H1 (cell line): ENCODE measurements at regions of chr16 and their contacts with region 1.

Region 1: GRCh38 chr16:29973384-29974246 is at the start of gene TAOK2:
- DNase-seq: peak; percentile 99 to 100
- H3K4me3 ChIP-seq: peak within 1 kb of the TSS; percentile 80 to 90 (median 85)
- H3K27ac ChIP-seq: peak within 1 kb of the TSS; percentile 55; the same call in 1 of the 2 replicates
- H3K4me1 ChIP-seq: peaks cover 4 to 20% (median 7%) of the 10 kb centered on the region in 4 experiments
- H3K27me3 ChIP-seq: peaks cover 2 to 10% (median 9%) of the 10 kb centered on the region in 4 experiments
- CTCF ChIP-seq: no peak
- EP300 ChIP-seq: no peak
- POLR2A ChIP-seq: peak in 1 of 2 experiments; percentile 54; a peak in 1 of 3 replicates
- RAD21 ChIP-seq: no peak
- total RNA-seq, gene TAOK2: 32.6 and 34.2 TPM in 2 replicates

Region 2: GRCh38 chr16:29926005-29926710 is 47.5 kb before region 1 on chr16 and contains the start of gene KCTD13:
- CTCF ChIA-PET with region 1: no interaction called
- POLR2A ChIA-PET with region 1: interaction called, 11 read pairs
- DNase-seq: peak; percentile 62 to 98
- H3K4me3 ChIP-seq: peak within 1 kb of the TSS; percentile 62 to 89 (median 85)
- H3K27ac ChIP-seq: peak within 1 kb of the TSS; percentile 86
- H3K4me1 ChIP-seq: peaks cover 0 to 8% (median 0%) of the 10 kb centered on the region in 4 experiments; a peak in 2 of 7 replicates
- H3K27me3 ChIP-seq: no peaks in the 10 kb centered on the region
- CTCF ChIP-seq: 0 out of 4 replicates have a peak, but pooled peaks of 1 of the 3 experiments have one; percentile 2
- EP300 ChIP-seq: no peak
- POLR2A ChIP-seq: peak; percentile 62 to 90
- RAD21 ChIP-seq: no peak
- total RNA-seq, gene KCTD13: 10.8 and 12.3 TPM in 2 replicates

Region 3: DNA sequence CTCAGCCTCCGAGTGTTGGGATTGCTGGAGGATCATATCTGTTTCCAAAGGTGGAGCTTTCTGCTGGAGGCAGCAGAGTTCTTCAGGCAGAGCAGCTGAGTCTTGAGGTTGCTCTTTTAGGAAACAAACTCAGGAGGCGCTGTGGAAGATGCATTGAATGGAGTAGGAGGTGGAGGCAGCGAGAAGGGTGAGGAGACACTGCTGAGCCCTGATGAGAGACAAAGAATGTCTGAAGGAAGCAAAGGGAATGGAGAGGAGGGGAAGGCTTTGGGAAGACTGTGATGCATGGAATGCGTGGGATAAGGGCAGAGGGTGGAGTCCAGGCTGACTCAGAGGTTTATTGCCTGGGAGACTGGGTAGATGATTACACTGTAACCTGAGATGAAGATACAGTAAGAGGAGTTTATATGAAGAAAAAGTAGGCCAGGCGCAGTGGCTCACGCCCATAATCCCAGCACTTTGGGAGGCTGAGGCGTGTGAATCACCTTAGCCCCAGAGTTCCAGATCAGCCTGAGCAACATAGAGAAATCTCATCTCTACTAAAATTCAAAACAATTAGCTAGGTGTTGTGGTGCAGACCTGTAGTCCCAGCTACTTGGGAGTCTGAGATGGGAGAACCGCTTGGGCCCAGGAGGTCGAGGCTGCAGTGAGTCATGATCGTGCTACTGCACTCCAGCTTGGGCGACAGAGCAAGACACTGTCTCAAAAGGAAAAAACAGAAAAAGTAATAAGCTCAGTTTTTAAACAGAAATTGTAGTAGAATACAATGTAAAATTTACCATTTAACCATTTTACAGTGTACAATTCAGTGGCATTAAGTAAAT is 29.6 kb before region 1 on chr16:
- CTCF ChIA-PET with region 1: interaction called, 19 read pairs
- POLR2A ChIA-PET with region 1: interaction called, 4 read pairs
- DNase-seq: no peak
- H3K4me3 ChIP-seq: no peak overlapping the region
- H3K27ac ChIP-seq: no peak overlapping the region
- H3K4me1 ChIP-seq: no peaks in the 10 kb centered on the region; a peak in 1 of 7 replicates
- H3K27me3 ChIP-seq: peaks cover 0 to 3% (median 0%) of the 10 kb centered on the region in 4 experiments; a peak in 1 of 7 replicates
- CTCF ChIP-seq: peak; percentile 22 to 67 (median 51)
- EP300 ChIP-seq: no peak
- POLR2A ChIP-seq: no peak
- RAD21 ChIP-seq: peak; percentile 25 to 31; a peak in 2 of 4 replicates

Region 4: GRCh38 chr16:29961479-29962343 is 11.9 kb before region 1 on chr16 and contains the start of gene TMEM219:
- CTCF ChIA-PET with region 1: interaction called, 6 read pairs
- POLR2A ChIA-PET with region 1: interaction called, 33 read pairs
- DNase-seq: peak in 1 of 2 experiments; percentile 96
- H3K4me3 ChIP-seq: peak within 1 kb of the TSS; percentile 51 to 81 (median 72)
- H3K27ac ChIP-seq: peak within 1 kb of the TSS; percentile 91
- H3K4me1 ChIP-seq: peaks cover 0 to 5% (median 3%) of the 10 kb centered on the region in 4 experiments; a peak in 5 of 7 replicates
- H3K27me3 ChIP-seq: peaks cover 0 to 2% (median 0%) of the 10 kb centered on the region in 4 experiments; a peak in 1 of 7 replicates
- CTCF ChIP-seq: no peak
- EP300 ChIP-seq: peak in 1 of 2 experiments; percentile 83; a peak in 1 of 3 replicates
- POLR2A ChIP-seq: peak; percentile 35 to 60
- RAD21 ChIP-seq: peak in 1 of 2 experiments; percentile 0; a peak in 1 of 4 replicates
- total RNA-seq, gene TMEM219: 60.2 and 64.9 TPM in 2 replicates

Region 5: DNA sequence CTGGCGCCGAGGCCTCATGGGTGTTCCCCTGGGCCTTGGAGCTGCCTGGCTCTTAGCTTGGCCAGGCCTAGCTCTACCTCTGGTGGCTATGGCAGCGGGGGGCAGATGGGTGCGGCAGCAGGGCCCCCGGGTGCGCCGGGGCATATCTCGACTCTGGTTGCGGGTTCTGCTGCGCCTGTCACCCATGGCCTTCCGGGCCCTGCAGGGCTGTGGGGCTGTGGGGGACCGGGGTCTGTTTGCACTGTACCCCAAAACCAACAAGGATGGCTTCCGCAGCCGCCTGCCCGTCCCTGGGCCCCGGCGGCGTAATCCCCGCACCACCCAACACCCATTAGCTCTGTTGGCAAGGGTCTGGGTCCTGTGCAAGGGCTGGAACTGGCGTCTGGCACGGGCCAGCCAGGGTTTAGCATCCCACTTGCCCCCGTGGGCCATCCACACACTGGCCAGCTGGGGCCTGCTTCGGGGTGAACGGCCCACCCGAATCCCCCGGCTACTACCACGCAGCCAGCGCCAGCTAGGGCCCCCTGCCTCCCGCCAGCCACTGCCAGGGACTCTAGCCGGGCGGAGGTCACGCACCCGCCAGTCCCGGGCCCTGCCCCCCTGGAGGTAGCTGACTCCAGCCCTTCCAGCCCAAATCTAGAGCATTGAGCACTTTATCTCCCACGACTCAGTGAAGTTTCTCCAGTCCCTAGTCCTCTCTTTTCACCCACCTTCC is 13.9 kb after region 1 on chr16:
- CTCF ChIA-PET with region 1: interaction called, 7 read pairs
- POLR2A ChIA-PET with region 1: interaction called, 14 read pairs
- DNase-seq: no peak
- H3K4me3 ChIP-seq: no peak overlapping the region
- H3K27ac ChIP-seq: no peak overlapping the region
- H3K4me1 ChIP-seq: no peaks in the 10 kb centered on the region
- H3K27me3 ChIP-seq: no peaks in the 10 kb centered on the region
- CTCF ChIP-seq: no peak
- EP300 ChIP-seq: no peak
- POLR2A ChIP-seq: no peak
- RAD21 ChIP-seq: no peak

Region 6: DNA sequence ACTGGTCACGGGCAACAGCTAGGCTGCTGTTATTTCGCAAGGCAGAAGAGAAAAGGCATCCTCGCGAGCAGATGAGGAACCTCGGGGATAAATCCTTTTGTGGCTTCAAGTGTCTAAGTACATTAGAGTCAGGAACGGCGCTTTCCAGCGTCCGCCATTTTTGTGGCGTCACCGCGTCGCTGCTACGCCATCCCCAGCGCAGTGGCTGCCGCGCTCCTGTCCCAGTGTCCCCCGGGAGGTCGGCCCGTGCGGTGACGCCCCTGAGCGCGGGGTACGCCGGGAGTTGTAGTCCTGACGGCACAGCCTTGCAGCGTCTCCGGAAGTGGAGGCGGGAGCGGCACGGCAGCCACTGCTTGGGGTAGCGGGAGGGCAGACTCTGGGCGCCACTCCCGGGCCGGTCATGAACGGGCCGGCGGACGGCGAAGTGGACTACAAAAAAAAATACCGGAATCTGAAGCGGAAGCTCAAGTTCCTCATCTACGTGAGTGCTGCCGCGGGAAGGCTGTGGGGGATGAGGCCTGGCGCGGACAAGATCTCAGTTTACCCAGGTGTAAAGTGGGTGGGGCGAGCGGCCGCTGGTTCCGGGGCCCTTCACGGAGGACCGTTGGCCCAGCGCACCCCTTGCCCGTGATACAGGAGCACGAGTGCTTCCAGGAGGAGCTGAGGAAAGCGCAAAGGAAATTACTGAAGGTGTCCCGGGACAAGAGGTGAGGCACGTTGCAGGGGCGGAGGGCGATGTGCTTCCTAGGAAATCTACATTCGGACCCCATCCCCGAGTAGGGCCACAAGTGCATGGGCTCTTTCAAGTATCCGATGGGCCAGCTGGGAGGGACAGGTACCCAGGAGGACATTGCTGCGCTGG is 22.5 kb after region 1 on chr16 and contains the start of gene INO80E:
- CTCF ChIA-PET with region 1: interaction called, 5 read pairs
- POLR2A ChIA-PET with region 1: interaction called, 23 read pairs
- DNase-seq: peak; percentile 90 to 98
- H3K4me3 ChIP-seq: peak within 1 kb of the TSS; percentile 75 to 91 (median 80)
- H3K27ac ChIP-seq: peak within 1 kb of the TSS; percentile 86
- H3K4me1 ChIP-seq: peaks cover 0 to 10% (median 4%) of the 10 kb centered on the region in 4 experiments; a peak in 6 of 7 replicates
- H3K27me3 ChIP-seq: no peaks in the 10 kb centered on the region
- CTCF ChIP-seq: no peak
- EP300 ChIP-seq: no peak
- POLR2A ChIP-seq: no peak
- RAD21 ChIP-seq: no peak
- total RNA-seq, gene INO80E: 91.2 and 92.7 TPM in 2 replicates